Transverse colon (tissue), 4 donors: ENCODE measurements at regions of chr22 and their contacts with region 1.

Region 1: GRCh38 chr22:31080848-31081649 is at the start of gene SMTN:
- DNase-seq: peak; percentile 97
- H3K4me3 ChIP-seq: peak within 1 kb of the TSS; percentile 57 to 71 (median 69)
- H3K27ac ChIP-seq: peak within 1 kb of the TSS; percentile 90 to 97 (median 96)
- H3K4me1 ChIP-seq: peaks cover 31 to 73% (median 58%) of the 10 kb centered on the region in 4 donors
- H3K27me3 ChIP-seq: no peaks in the 10 kb centered on the region
- CTCF ChIP-seq: no peak
- EP300 ChIP-seq: no peak
- POLR2A ChIP-seq: peak; percentile 98
- total RNA-seq, gene SMTN: 171 to 341 (median 219) TPM

Region 2: DNA sequence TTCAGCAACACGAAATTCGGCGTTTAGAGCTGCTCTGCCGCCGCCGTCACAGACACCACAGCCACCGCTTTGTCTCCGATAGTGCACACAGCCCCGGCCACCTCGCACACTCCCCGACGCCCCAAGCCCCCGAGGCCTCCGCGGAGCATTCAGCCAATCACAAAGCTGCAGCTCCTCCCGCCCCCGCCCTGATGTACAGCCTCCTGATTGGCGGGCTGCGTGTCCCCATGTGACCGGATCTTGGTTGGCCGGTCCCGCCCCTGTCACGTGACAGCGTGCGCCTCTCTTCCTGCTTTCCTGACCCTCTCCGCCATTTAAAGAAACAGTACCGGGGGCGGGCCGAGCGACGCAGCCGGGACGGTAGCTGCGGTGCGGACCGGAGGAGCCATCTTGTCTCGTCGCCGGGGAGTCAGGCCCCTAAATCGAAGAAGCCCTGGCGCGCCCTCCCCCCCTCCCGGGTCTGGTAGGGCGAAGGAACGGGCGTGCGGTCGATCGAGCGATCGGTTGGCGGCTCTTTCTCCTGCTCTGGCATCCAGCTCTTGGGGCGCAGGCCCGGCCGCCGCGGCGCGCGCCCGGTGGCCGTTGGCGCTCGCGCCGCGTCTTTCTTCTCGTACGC is 112.0 kb before region 1 on chr22 and contains the start of gene TUG1:
- in situ Hi-C with region 1: loop called in 1 of 4 experiments (anchors 5 kb)
- intact Hi-C with region 1: no loop called
- DNase-seq: peak; percentile 99
- H3K4me3 ChIP-seq: peak within 1 kb of the TSS; percentile 83 to 97 (median 89)
- H3K27ac ChIP-seq: peak within 1 kb of the TSS; percentile 94 to 99 (median 96)
- H3K4me1 ChIP-seq: peaks cover 0 to 47% (median 22%) of the 10 kb centered on the region in 4 donors
- H3K27me3 ChIP-seq: no peaks in the 10 kb centered on the region
- CTCF ChIP-seq: no peak
- EP300 ChIP-seq: no peak
- POLR2A ChIP-seq: peak; percentile 81
- total RNA-seq, gene TUG1: 77.7 to 294 (median 112) TPM

Region 3: GRCh38 chr22:31486951-31487350 is 405.9 kb after region 1 on chr22:
- in situ Hi-C with region 1: no loop called
- intact Hi-C with region 1: no loop called
- DNase-seq: no peak
- H3K4me3 ChIP-seq: no peak overlapping the region
- H3K27ac ChIP-seq: no peak overlapping the region
- H3K4me1 ChIP-seq: peaks cover 16 to 30% (median 22%) of the 10 kb centered on the region in 4 donors
- H3K27me3 ChIP-seq: no peaks in the 10 kb centered on the region
- CTCF ChIP-seq: no peak
- EP300 ChIP-seq: no peak
- POLR2A ChIP-seq: no peak